CD8-positive, alpha-beta T cell (primary cell): ENCODE measurements at regions of chr4 and their contacts with region 1.

Region 1: DNA sequence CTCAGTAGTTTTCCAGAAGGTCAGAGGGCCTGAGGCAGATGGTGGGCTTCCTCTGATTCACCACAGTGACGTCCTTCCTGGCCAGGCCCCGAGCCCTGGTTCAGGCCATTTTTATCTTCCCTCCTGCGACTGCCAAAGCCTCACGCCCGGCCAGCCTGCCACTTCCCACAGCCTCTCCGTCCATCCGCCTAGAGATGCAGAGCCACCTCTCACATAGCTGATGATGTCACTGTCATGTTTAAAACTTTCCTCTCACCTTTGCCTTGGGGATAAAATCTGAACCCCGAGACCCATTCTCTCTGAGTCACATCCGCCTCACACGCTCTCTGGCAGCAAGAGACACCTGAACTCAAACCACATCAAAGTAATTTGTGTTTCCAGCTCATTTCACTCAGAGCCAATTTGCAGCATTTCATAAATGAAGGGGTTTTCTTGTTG is 175.3 kb downstream of the QDPR start:
- DNase-seq: peak; percentile 32 to 90 (median 70)
- ATAC-seq: peak; percentile 95
- H3K4me3 ChIP-seq: no peak overlapping the region
- H3K4me3 Mint-ChIP-seq: peak overlapping the region; percentile 27
- H3K27ac ChIP-seq: peak overlapping the region in 1 of 2 experiments; percentile 44
- H3K27ac Mint-ChIP-seq: peak overlapping the region; percentile 91
- H3K4me1 ChIP-seq: peaks cover 17% of the 10 kb centered on the region
- H3K4me1 Mint-ChIP-seq: peaks cover 22% of the 10 kb centered on the region
- H3K27me3 ChIP-seq: no peaks in the 10 kb centered on the region
- H3K27me3 Mint-ChIP-seq: no peaks in the 10 kb centered on the region
- CTCF ChIP-seq: no peak

Region 2: GRCh38 chr4:15655229-15656037 is 1681.1 kb before region 1 on chr4 and contains the start of gene FBXL5:
- CTCF ChIA-PET with region 1: no interaction called
- POLR2A ChIA-PET with region 1: no interaction called
- intact Hi-C with region 1: no loop called
- DNase-seq: peak; percentile 66 to 95 (median 80)
- ATAC-seq: peak; percentile 79
- H3K4me3 ChIP-seq: peak within 1 kb of the TSS; percentile 67 to 85
- H3K4me3 Mint-ChIP-seq: peak within 1 kb of the TSS; percentile 98
- H3K27ac ChIP-seq: peak within 1 kb of the TSS; percentile 88 to 92
- H3K27ac Mint-ChIP-seq: peak within 1 kb of the TSS; percentile 97
- H3K4me1 ChIP-seq: peaks cover 51% of the 10 kb centered on the region
- H3K4me1 Mint-ChIP-seq: peaks cover 46% of the 10 kb centered on the region
- H3K27me3 ChIP-seq: no peaks in the 10 kb centered on the region
- H3K27me3 Mint-ChIP-seq: no peaks in the 10 kb centered on the region
- CTCF ChIP-seq: no peak
- total RNA-seq, gene FBXL5: 60.4 to 61.7 TPM

Region 3: DNA sequence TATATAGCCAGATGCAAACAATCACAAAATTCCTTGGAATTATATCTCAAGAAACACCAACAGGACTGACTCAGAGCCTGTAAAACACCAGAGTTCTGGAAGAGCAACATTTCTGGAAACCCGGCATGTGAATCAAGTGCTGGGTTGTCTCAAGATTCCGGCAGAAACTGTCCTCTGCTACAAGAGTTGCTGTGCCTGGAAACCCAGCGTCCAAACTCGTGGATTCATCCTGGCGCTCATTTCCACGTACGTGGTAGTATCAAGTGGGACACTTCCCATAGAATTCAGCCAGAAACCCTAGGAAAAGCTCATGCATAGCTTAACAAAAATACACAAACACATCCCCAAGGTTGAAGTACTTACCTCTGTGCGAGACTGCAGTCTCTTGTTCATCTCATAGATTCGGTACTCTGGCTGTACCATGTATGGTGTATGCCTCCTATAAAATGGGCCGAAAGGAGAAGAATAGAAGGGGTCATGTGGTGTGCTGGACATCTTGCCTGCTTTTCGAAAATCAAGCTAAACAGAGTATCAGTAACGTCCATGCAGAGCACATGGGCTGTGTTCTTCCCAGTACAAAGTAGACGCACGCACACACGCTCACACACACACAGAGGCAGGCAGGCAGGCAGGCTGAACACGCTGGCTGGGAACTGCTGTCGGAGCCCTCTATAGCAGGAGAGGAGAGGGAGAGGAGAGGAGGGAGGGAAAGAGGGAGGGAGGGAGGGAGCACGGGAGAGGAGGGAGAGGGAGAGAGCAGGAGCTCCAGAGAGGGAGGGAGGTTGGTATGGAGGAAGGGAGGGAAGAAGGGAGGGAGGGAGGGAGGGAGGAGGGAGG is 438.3 kb before region 1 on chr4 and contains the start of gene LDB2:
- CTCF ChIA-PET with region 1: no interaction called
- POLR2A ChIA-PET with region 1: no interaction called
- intact Hi-C with region 1: no loop called
- DNase-seq: peak in 1 of 9 experiments; percentile 20
- ATAC-seq: no peak
- H3K4me3 ChIP-seq: peak within 1 kb of the TSS in 1 of 2 experiments; percentile 16
- H3K4me3 Mint-ChIP-seq: no peak within 1 kb of the TSS
- H3K27ac ChIP-seq: no peak within 1 kb of the TSS
- H3K27ac Mint-ChIP-seq: no peak within 1 kb of the TSS
- H3K4me1 ChIP-seq: peaks cover 10% of the 10 kb centered on the region
- H3K4me1 Mint-ChIP-seq: peaks cover 16% of the 10 kb centered on the region
- H3K27me3 ChIP-seq: no peaks in the 10 kb centered on the region
- H3K27me3 Mint-ChIP-seq: peaks cover 8% of the 10 kb centered on the region
- CTCF ChIP-seq: no peak
- total RNA-seq, gene LDB2: not detected

Region 4: GRCh38 chr4:17347445-17347844 is 10.9 kb after region 1 on chr4:
- CTCF ChIA-PET with region 1: interaction called, 11 read pairs
- POLR2A ChIA-PET with region 1: no interaction called
- intact Hi-C with region 1: no loop called
- DNase-seq: peak in 3 of 9 experiments; percentile 24 to 49 (median 43)
- ATAC-seq: no peak
- H3K4me3 ChIP-seq: no peak overlapping the region
- H3K4me3 Mint-ChIP-seq: no peak overlapping the region
- H3K27ac ChIP-seq: no peak overlapping the region
- H3K27ac Mint-ChIP-seq: no peak overlapping the region
- H3K4me1 ChIP-seq: no peaks in the 10 kb centered on the region
- H3K4me1 Mint-ChIP-seq: no peaks in the 10 kb centered on the region
- H3K27me3 ChIP-seq: no peaks in the 10 kb centered on the region
- H3K27me3 Mint-ChIP-seq: no peaks in the 10 kb centered on the region
- CTCF ChIP-seq: peak; percentile 43

Region 5: GRCh38 chr4:17941731-17942130 is 605.2 kb after region 1 on chr4:
- CTCF ChIA-PET with region 1: no interaction called
- POLR2A ChIA-PET with region 1: no interaction called
- intact Hi-C with region 1: no loop called
- DNase-seq: no peak
- ATAC-seq: no peak
- H3K4me3 ChIP-seq: no peak overlapping the region
- H3K4me3 Mint-ChIP-seq: no peak overlapping the region
- H3K27ac ChIP-seq: no peak overlapping the region
- H3K27ac Mint-ChIP-seq: no peak overlapping the region
- H3K4me1 ChIP-seq: no peaks in the 10 kb centered on the region
- H3K4me1 Mint-ChIP-seq: no peaks in the 10 kb centered on the region
- H3K27me3 ChIP-seq: no peaks in the 10 kb centered on the region
- H3K27me3 Mint-ChIP-seq: no peaks in the 10 kb centered on the region
- CTCF ChIP-seq: no peak